ENCODE measurements at regions of chr3 and their contacts with region 1.

Region 1: GRCh38 chr3:59212128-59212779 is 162.4 kb upstream of the CFAP20DC start:
- DNase-seq: peak; percentile 19
- ATAC-seq: peak; percentile 97
- H3K4me3 ChIP-seq: no peak overlapping the region
- H3K27ac ChIP-seq: no peak overlapping the region
- H3K4me1 ChIP-seq: no peaks in the 10 kb centered on the region
- H3K27me3 ChIP-seq: no peaks in the 10 kb centered on the region
- CTCF ChIP-seq: peak; percentile 52 to 73 (median 66)
- EP300 ChIP-seq: no peak
- POLR2A ChIP-seq: no peak
- RAD21 ChIP-seq: peak; percentile 92

Region 2: GRCh38 chr3:58474348-58474911 is 737.8 kb before region 1 on chr3:
- CTCF ChIA-PET with region 1: no interaction called
- POLR2A ChIA-PET with region 1: no interaction called
- RAD21 ChIA-PET with region 1: no interaction called
- SMC1A ChIA-PET with region 1: no interaction called
- in situ Hi-C with region 1: no loop called
- intact Hi-C with region 1: no loop called
- DNase-seq: no peak
- ATAC-seq: peak; percentile 44
- H3K4me3 ChIP-seq: no peak overlapping the region
- H3K27ac ChIP-seq: no peak overlapping the region
- H3K4me1 ChIP-seq: peaks cover 6% of the 10 kb centered on the region; the same call in 1 of the 2 replicates
- H3K27me3 ChIP-seq: no peaks in the 10 kb centered on the region
- CTCF ChIP-seq: no peak
- EP300 ChIP-seq: no peak
- POLR2A ChIP-seq: no peak
- RAD21 ChIP-seq: no peak

Region 3: GRCh38 chr3:59235634-59236012 is 23.4 kb after region 1 on chr3:
- CTCF ChIA-PET with region 1: interaction called, 14 read pairs
- POLR2A ChIA-PET with region 1: no interaction called
- RAD21 ChIA-PET with region 1: interaction called, 20 read pairs
- SMC1A ChIA-PET with region 1: interaction called, 33 read pairs
- in situ Hi-C with region 1: no loop called
- intact Hi-C with region 1: no loop called
- DNase-seq: peak; percentile 46
- ATAC-seq: peak; percentile 94
- H3K4me3 ChIP-seq: no peak overlapping the region
- H3K27ac ChIP-seq: no peak overlapping the region
- H3K4me1 ChIP-seq: peaks cover 3% of the 10 kb centered on the region
- H3K27me3 ChIP-seq: no peaks in the 10 kb centered on the region
- CTCF ChIP-seq: no peak
- EP300 ChIP-seq: peak; percentile 56 to 81; a peak in 3 of 4 replicates
- POLR2A ChIP-seq: no peak
- RAD21 ChIP-seq: no peak

Region 4: GRCh38 chr3:59313365-59313764 is 101.1 kb after region 1 on chr3:
- CTCF ChIA-PET with region 1: interaction called, 22 read pairs
- POLR2A ChIA-PET with region 1: no interaction called
- RAD21 ChIA-PET with region 1: interaction called, 18 read pairs
- SMC1A ChIA-PET with region 1: interaction called, 19 read pairs
- in situ Hi-C with region 1: no loop called
- intact Hi-C with region 1: loop called (anchors 1 kb)
- DNase-seq: no peak
- ATAC-seq: peak; percentile 93
- H3K4me3 ChIP-seq: no peak overlapping the region
- H3K27ac ChIP-seq: no peak overlapping the region
- H3K4me1 ChIP-seq: no peaks in the 10 kb centered on the region
- H3K27me3 ChIP-seq: no peaks in the 10 kb centered on the region
- CTCF ChIP-seq: peak; percentile 63 to 85 (median 76)
- EP300 ChIP-seq: no peak
- POLR2A ChIP-seq: no peak
- RAD21 ChIP-seq: peak; percentile 99

Region 5: GRCh38 chr3:59444294-59444671 is 232.0 kb after region 1 on chr3:
- CTCF ChIA-PET with region 1: interaction called, 8 read pairs
- POLR2A ChIA-PET with region 1: no interaction called
- RAD21 ChIA-PET with region 1: no interaction called
- SMC1A ChIA-PET with region 1: interaction called, 14 read pairs
- in situ Hi-C with region 1: no loop called
- intact Hi-C with region 1: no loop called
- DNase-seq: no peak
- ATAC-seq: peak; percentile 86
- H3K4me3 ChIP-seq: no peak overlapping the region
- H3K27ac ChIP-seq: peak overlapping the region; percentile 72
- H3K4me1 ChIP-seq: peaks cover 10% of the 10 kb centered on the region
- H3K27me3 ChIP-seq: no peaks in the 10 kb centered on the region
- CTCF ChIP-seq: no peak
- EP300 ChIP-seq: no peak
- POLR2A ChIP-seq: no peak
- RAD21 ChIP-seq: no peak

Region 6: DNA sequence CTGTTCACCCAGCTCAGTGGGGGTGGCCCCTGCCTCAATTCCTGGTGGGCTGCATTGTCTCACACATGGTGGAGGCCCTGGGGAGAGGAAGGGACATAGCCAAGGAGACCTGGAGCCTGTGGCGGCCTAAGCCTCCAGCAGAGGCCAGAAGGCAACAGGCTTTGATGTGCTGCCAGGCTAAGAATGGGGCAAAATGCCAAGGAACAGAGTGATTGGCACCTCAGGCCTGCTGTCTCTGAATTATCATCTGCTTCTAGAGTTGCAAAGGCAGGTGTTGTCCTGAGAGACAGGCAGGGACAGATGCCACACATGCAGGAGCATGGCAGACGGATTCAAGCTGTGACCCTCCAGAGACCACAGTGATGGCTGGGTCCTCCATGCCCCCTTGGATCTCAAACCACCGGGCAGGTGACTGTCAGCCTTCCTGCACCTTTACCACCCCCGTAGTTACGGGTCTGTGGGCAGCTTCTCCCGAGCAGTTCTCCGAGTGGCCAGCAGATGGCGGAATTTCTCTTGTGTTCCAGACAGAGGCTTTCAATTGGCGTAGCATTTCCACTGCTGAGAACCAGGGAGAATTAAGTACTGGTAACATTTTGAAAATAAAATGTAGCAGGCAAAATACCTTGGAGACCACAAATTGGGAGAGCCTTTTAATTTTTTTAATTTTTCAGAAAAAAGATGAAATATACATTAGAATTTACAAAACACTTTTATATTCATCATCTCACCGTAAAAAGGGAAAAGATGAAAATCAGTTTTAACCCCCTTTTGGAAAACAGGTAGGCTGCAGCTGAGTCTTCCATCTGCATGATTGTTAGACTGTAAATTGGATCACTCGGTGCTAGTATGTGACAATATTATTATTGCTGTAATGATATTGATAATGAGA is 363.1 kb after region 1 on chr3:
- CTCF ChIA-PET with region 1: interaction called, 24 read pairs
- POLR2A ChIA-PET with region 1: no interaction called
- RAD21 ChIA-PET with region 1: interaction called, 5 read pairs
- SMC1A ChIA-PET with region 1: interaction called, 14 read pairs
- in situ Hi-C with region 1: loop called (anchors 5 kb)
- intact Hi-C with region 1: loop called (anchors 2 kb)
- DNase-seq: peak; percentile 40
- ATAC-seq: peak; percentile 95
- H3K4me3 ChIP-seq: no peak overlapping the region
- H3K27ac ChIP-seq: no peak overlapping the region
- H3K4me1 ChIP-seq: no peaks in the 10 kb centered on the region
- H3K27me3 ChIP-seq: no peaks in the 10 kb centered on the region
- CTCF ChIP-seq: peak; percentile 93 to 97 (median 95)
- EP300 ChIP-seq: no peak
- POLR2A ChIP-seq: no peak
- RAD21 ChIP-seq: peak; percentile 97

Region 7: GRCh38 chr3:59596741-59597140 is 384.5 kb after region 1 on chr3:
- CTCF ChIA-PET with region 1: no interaction called
- POLR2A ChIA-PET with region 1: no interaction called
- RAD21 ChIA-PET with region 1: no interaction called
- SMC1A ChIA-PET with region 1: no interaction called
- in situ Hi-C with region 1: no loop called
- intact Hi-C with region 1: no loop called
- DNase-seq: no peak
- ATAC-seq: no peak
- H3K4me3 ChIP-seq: no peak overlapping the region
- H3K27ac ChIP-seq: no peak overlapping the region
- H3K4me1 ChIP-seq: no peaks in the 10 kb centered on the region
- H3K27me3 ChIP-seq: no peaks in the 10 kb centered on the region; a peak in 1 of 4 replicates
- CTCF ChIP-seq: no peak
- EP300 ChIP-seq: no peak
- POLR2A ChIP-seq: no peak
- RAD21 ChIP-seq: no peak

Measured in GM12878 (cell line).